Transverse colon (tissue), 4 donors: ENCODE measurements at regions of chr16 and their contacts with region 1.

Region 1: GRCh38 chr16:58000706-58001676 is at the start of gene USB1:
- DNase-seq: peak; percentile 89
- H3K4me3 ChIP-seq: peak within 1 kb of the TSS; percentile 70 to 94 (median 90)
- H3K27ac ChIP-seq: peak within 1 kb of the TSS; percentile 94 to 98 (median 96)
- H3K4me1 ChIP-seq: peaks cover 0 to 30% (median 19%) of the 10 kb centered on the region in 4 donors
- H3K27me3 ChIP-seq: no peaks in the 10 kb centered on the region
- CTCF ChIP-seq: peak; percentile 53 to 80 (median 64)
- EP300 ChIP-seq: no peak
- POLR2A ChIP-seq: peak; percentile 71
- total RNA-seq, gene USB1: 21.3 to 63.4 (median 45.2) TPM

Region 2: GRCh38 chr16:57757326-57757786 is 243.6 kb before region 1 on chr16:
- in situ Hi-C with region 1: loop called in 3 of 4 experiments (anchors 25 kb)
- intact Hi-C with region 1: no loop called
- DNase-seq: peak; percentile 91
- H3K4me3 ChIP-seq: no peak overlapping the region
- H3K27ac ChIP-seq: no peak overlapping the region
- H3K4me1 ChIP-seq: no peaks in the 10 kb centered on the region
- H3K27me3 ChIP-seq: no peaks in the 10 kb centered on the region
- CTCF ChIP-seq: peak; percentile 89 to 99 (median 97)
- EP300 ChIP-seq: no peak
- POLR2A ChIP-seq: no peak

Region 3: GRCh38 chr16:57899771-57900661 is 101.0 kb before region 1 on chr16:
- in situ Hi-C with region 1: loop called in 3 of 4 experiments (anchors 5 to 10 kb)
- intact Hi-C with region 1: loop called (anchors 2 kb)
- DNase-seq: peak; percentile 76
- H3K4me3 ChIP-seq: no peak overlapping the region
- H3K27ac ChIP-seq: no peak overlapping the region
- H3K4me1 ChIP-seq: no peaks in the 10 kb centered on the region
- H3K27me3 ChIP-seq: peaks cover 35% of the 10 kb centered on the region
- CTCF ChIP-seq: peak; percentile 79 to 88 (median 83)
- EP300 ChIP-seq: no peak
- POLR2A ChIP-seq: no peak

Region 4: DNA sequence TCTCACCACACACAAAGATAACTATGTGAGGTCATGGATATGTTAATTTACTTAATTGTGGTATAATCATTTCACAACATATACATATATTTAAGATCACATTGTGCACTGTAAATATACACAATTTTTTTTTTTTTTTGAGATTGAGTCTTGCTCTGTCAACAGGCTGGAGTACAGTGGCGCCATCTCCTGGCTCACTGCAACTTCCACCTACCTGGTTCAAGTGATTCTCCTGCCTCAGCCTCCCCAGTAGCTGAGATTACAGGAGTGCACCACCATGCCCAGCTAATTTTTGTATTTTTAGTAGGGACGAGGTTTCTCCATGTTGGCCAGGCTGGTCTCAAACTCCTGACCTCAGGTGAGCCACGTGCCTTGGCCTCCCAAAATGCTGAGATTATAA is 305.3 kb after region 1 on chr16:
- in situ Hi-C with region 1: loop called in 1 of 4 experiments (anchors 25 kb)
- intact Hi-C with region 1: no loop called
- DNase-seq: peak; percentile 60
- H3K4me3 ChIP-seq: no peak overlapping the region
- H3K27ac ChIP-seq: no peak overlapping the region
- H3K4me1 ChIP-seq: no peaks in the 10 kb centered on the region
- H3K27me3 ChIP-seq: no peaks in the 10 kb centered on the region
- CTCF ChIP-seq: peak; percentile 30 to 50 (median 45)
- EP300 ChIP-seq: no peak
- POLR2A ChIP-seq: no peak

Region 5: DNA sequence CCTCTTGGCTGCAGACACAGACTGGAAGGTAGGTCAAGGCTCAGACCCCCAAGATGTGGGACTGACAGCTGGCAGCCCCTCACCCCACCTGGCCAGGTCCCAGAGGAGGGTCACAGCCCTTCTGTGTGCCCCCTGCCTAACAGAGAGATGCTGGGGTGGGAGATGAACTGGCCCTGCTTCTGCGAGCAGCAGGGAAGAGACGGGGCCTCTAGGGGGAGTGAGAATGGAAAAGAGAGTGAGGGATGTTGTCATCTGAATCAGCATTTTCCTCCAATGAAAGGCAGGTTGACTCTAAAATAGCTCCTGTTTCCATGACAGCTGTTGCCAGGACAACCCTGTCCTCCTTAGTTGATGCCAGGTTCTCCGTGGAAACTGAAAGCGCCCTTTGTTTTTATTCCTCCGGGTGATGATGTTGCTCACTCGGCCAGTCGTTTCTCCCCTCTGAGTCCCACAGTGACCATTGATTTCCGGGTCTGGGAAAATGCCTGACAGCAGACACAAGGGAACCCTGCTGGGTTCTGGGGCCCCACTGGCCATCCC is 494.1 kb after region 1 on chr16:
- in situ Hi-C with region 1: loop called in 1 of 4 experiments (anchors 25 kb)
- intact Hi-C with region 1: no loop called
- DNase-seq: peak; percentile 43
- H3K4me3 ChIP-seq: no peak overlapping the region
- H3K27ac ChIP-seq: peak overlapping the region in 2 of 4 donors; percentile 16 to 29
- H3K4me1 ChIP-seq: peaks cover 0 to 4% (median 2%) of the 10 kb centered on the region in 4 donors
- H3K27me3 ChIP-seq: peaks cover 8% of the 10 kb centered on the region
- CTCF ChIP-seq: peak in 3 of 5 experiments; percentile 6 to 15 (median 9)
- EP300 ChIP-seq: no peak
- POLR2A ChIP-seq: no peak

Region 6: DNA sequence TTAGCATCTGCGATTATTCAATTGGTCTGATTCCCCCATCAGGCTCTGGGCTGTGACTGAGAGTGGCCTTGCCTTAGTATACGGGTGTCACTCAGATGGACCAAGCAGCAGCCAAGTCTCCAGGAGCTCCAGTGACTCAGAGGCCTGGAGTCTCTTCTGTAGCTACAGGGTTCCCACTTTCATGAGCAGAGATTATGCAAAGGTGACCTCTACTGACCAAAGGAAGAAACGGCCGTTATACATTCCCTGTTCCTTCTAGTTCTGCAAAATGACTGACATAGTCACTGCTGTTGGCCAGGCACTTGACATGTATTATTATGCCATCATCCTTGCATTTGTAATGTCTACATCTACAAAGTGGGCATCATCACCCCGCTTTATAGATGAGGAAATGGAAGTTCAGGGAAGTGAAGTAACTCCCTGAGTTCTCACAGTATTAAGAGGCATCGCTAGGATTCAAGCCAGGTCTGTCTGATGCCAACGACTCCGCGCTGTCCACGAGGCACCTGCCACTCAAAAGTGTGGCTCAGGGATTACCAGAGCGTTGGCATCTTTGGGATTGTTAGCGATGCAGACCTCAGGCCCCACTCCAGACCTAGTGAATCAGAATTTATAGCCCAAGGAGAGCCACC is 660.3 kb after region 1 on chr16:
- in situ Hi-C with region 1: loop called in 1 of 4 experiments (anchors 25 kb)
- intact Hi-C with region 1: no loop called
- DNase-seq: peak; percentile 38
- H3K4me3 ChIP-seq: no peak overlapping the region
- H3K27ac ChIP-seq: no peak overlapping the region
- H3K4me1 ChIP-seq: peaks cover 0 to 5% (median 2%) of the 10 kb centered on the region in 4 donors
- H3K27me3 ChIP-seq: no peaks in the 10 kb centered on the region
- CTCF ChIP-seq: peak; percentile 38 to 50 (median 41)
- EP300 ChIP-seq: no peak
- POLR2A ChIP-seq: no peak